AG04449 (cell line): ENCODE measurements at regions of chr14 and their contacts with region 1.

Region 1: DNA sequence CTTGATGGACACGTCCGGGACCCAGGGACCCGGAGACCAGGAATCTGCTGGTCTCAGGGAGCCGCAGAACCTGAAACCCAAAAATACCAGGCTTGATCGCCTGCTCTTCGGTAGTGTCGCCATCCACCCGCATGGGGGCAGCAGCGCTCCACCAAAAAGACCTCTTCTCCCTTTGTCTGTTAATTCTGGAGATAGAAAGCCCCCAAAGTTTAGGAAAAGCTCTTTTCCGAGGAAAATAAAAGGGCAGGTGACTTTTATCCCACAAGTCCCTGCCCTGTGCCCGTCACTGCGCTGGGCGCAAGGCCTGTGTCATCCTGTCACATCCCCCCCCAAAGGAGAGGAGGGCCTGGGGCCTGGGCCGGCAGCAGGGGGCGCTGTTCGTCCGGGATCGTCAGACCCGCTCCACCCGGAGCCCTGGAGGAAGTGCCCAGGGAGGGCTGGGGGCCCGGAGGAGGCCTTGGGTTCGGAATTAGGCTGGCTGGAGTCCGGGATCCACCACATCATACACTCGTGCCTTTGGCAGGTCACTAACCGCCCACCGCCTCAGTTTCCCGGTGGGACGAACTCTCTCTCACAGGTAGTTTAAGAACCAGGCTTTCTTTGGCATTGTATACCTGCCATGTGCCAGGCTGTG is 31.9 kb downstream of the DAD1 start:
- DNase-seq: no peak
- H3K4me3 ChIP-seq: peak overlapping the region; percentile 44
- CTCF ChIP-seq: peak; percentile 96

Region 2: DNA sequence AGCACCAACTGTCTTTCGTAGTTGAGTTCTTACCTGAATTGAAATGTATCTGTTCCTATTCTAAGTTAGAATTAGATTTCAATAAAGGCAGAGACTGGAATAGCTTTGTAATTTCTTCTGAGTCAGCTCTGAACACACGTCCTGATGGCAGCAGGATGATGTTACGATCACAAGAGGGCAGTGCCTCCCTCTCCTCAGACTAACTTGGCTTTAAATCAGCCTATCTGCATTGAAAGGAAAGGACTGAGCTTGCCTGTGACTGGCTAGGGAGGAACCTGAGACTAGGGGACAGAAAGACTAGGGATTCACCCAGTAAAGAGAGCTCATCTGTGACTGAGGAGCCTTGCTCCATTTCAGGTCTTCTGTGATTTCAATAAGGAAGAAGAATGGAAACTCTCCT is 559.8 kb before region 1 on chr14:
- CTCF ChIA-PET with region 1: no interaction called
- POLR2A ChIA-PET with region 1: no interaction called
- DNase-seq: no peak
- H3K4me3 ChIP-seq: no peak overlapping the region
- CTCF ChIP-seq: no peak

Region 3: DNA sequence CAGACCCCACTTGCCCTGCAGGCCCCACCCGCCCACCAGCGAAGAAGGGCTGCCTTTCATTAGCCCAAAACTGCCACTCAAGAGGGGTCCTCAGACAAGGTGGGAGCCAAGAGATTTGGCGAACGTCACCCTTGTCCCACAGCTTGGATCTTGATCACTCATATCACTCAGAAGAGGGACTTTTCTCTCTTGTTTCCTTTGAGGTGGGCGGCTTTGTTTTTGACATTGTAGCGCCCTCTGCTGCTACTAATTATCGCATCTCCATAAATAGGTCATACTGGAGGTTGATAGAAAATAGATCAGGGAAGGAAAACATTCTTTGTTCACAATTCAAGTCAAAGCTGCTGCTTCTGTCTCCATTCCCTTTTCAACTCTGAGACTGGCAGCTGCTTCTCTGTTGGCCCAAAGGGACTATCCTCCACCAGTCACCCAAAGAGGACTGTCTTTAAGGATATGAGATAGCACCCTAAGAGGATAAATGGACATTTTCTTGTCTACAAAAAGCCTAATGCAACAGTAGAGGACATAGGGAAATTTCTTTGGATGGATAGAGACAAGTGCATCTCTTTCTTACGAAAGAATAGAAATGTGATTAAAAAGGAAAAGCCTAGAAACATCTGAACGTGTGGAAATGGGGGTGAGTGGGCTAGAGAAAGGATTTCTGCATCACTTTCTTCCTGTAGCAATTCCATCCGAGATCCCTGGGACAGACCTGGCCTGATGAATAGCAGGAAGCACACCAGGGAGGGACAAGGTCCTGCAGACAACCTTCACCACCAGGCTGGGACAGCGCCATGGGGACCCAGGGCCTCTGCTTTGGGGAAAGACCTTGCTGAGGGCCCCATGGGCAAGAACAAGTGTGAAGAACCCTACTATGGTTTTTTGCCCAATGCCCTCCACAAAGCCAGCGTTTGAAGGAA is 83.9 kb before region 1 on chr14:
- CTCF ChIA-PET with region 1: interaction called, 21 read pairs
- POLR2A ChIA-PET with region 1: no interaction called
- DNase-seq: no peak
- H3K4me3 ChIP-seq: no peak overlapping the region
- CTCF ChIP-seq: peak; percentile 36

Region 4: GRCh38 chr14:22570132-22570949 is 13.2 kb after region 1 on chr14:
- CTCF ChIA-PET with region 1: interaction called, 68 read pairs
- POLR2A ChIA-PET with region 1: interaction called, 3 read pairs
- DNase-seq: no peak
- H3K4me3 ChIP-seq: no peak overlapping the region
- CTCF ChIP-seq: peak; percentile 37

Region 5: DNA sequence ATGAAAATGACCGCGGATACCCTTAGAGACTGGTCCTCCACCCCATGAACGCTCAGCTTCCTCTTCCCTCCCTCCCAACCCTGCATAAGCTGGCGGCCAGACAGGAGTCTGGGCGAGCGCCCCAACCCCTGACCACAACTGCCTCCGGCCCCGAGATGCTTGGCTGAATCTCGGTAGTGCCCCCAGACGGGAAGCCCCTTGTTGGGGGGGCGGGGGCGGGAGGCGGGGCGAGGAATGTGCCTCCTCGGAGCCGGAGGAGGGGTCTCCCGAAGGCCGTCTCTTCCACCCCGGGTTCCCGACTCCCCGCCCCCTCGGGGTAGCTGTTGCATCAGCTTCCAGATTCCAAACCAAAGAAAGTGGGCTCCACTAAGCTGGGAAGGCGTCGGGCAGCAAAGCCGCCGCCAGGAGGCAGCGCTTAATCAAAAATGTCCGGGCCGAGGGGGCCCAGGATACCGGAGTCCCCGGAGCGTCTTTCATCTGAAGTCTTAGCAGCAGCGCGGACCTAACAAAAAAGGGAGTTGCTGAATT is 265.5 kb after region 1 on chr14:
- CTCF ChIA-PET with region 1: interaction called, 56 read pairs
- POLR2A ChIA-PET with region 1: no interaction called
- DNase-seq: no peak
- H3K4me3 ChIP-seq: peak overlapping the region; percentile 24
- CTCF ChIP-seq: peak; percentile 78

Region 6: GRCh38 chr14:22872033-22872832 is 315.1 kb after region 1 on chr14:
- CTCF ChIA-PET with region 1: interaction called, 36 read pairs
- POLR2A ChIA-PET with region 1: no interaction called
- DNase-seq: no peak
- H3K4me3 ChIP-seq: peak overlapping the region; percentile 81
- CTCF ChIP-seq: peak; percentile 87

Region 7: DNA sequence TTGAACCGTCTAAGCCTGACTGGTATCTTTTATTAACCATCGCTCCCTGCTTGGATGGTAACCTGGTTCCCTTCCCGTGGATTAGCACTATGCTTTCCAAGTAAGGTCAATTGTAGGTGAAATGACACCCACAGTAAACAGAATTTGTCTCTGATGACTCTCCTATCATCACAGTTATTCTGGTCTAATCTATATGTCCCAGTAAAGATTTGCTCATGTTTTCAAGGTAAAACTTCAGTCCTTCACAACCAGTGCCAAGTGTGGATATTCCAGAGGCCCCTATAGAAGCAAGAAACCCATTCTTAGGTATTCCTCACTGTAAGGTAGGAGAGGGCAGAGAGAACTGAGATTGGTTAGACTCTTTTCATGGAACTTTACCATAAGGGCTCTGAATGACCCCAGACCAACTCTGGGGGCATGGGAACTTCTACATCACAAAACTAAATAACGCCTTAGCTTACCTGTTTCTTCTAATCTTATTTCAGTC is 409.7 kb after region 1 on chr14:
- CTCF ChIA-PET with region 1: interaction called, 10 read pairs
- POLR2A ChIA-PET with region 1: no interaction called
- DNase-seq: no peak
- H3K4me3 ChIP-seq: no peak overlapping the region
- CTCF ChIP-seq: no peak